ENCODE measurements at regions of chr14 and their contacts with region 1.

Region 1: GRCh38 chr14:20613094-20614037 is 22.2 kb upstream of the RNASE12 start:
- DNase-seq: peak; percentile 83
- ATAC-seq: peak; percentile 81

Region 2: DNA sequence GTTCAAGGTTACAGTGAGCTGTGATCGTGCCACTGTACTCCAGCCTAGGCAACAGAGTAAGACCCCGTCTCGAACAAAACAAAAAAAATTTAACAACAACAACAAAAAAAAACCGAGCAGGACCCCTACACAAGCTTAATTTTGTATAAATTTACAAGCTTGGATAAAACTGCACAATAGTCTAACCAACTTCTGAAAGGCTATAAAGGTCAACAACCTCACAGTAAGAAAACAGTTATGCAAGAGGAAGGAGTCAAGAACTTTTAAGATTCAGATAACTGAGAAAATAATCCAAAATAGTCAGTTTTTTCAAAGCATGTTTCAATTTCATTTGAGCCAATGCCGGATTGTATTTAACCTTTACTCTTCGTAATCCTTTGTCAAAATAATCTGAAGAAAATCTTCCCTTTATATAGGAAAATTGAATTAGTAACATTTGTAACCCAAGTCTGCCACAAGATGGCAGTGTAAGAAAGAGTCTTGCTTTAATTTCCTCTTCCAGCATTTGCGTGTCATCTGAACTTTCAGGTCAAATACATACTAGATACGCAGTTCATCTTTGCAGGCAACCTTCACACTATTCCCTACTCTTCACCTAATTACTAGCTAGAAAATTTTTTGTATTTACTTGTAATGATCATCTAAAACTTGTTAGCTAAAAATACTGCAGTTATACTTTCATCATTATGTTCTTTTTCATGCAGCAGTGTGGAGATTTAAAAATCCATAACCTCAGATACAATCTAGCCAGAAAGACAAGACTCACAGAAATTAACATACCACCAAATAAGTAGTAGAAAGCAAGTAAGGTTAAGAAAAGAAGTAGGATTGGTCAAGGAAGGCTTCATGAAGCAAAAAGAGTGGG is 286.1 kb before region 1 on chr14:
- intact Hi-C with region 1: loop called (anchors 2 kb)
- DNase-seq: no peak
- ATAC-seq: peak; percentile 70

Measured in Right ventricle myocardium superior (tissue), 1 donor.